ENCODE measurements at regions of chr20 and their contacts with region 1.

Region 1: GRCh38 chr20:32902456-32903420 is 44.0 kb downstream of the EFCAB8 start:
- DNase-seq: peak; percentile 61
- ATAC-seq: peak; percentile 80

Region 2: GRCh38 chr20:33005132-33005566 is 102.4 kb after region 1 on chr20:
- intact Hi-C with region 1: no loop called
- DNase-seq: no peak
- ATAC-seq: no peak

Region 3: GRCh38 chr20:33299111-33299603 is 396.4 kb after region 1 on chr20:
- intact Hi-C with region 1: loop called (anchors 10 kb)
- DNase-seq: peak; percentile 75
- ATAC-seq: peak; percentile 75